ENCODE measurements at regions of chr6 and their contacts with region 1.

Region 1: DNA sequence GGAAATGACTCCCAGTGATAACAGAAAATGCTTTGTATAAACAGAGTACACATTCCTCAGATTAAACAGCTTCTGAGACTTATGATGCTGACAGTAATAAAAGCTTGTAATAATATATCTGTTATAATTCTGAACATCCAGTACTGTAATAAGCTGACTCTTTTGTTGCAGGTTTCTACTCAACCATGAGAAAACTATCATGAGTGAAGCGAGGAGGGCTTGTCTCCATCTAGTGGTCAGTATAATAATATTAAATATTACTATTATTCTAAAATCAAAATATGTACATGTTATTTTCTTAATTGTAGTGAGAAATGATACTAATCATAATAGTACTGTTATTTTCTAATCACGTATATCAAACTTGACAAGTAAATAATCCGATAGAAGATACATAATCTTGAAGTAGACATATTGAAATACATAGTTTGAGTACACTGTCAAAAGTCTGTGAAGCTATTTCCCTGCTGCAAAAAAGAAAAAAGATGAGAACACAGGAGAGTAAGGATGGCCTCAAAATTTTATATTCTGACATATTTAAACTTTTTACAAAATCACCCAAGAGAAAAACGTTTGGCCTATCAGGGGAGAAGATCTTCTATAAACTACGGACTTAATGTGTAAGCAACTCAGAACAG is 183.1 kb downstream of the MOXD1 start:
- DNase-seq: peak; percentile 63
- H3K4me3 ChIP-seq: no peak overlapping the region
- H3K27ac ChIP-seq: no peak overlapping the region
- H3K4me1 ChIP-seq: peaks cover 5% of the 10 kb centered on the region
- H3K27me3 ChIP-seq: no peaks in the 10 kb centered on the region
- CTCF ChIP-seq: peak in 1 of 2 donors; percentile 25
- POLR2A ChIP-seq: no peak

Region 2: DNA sequence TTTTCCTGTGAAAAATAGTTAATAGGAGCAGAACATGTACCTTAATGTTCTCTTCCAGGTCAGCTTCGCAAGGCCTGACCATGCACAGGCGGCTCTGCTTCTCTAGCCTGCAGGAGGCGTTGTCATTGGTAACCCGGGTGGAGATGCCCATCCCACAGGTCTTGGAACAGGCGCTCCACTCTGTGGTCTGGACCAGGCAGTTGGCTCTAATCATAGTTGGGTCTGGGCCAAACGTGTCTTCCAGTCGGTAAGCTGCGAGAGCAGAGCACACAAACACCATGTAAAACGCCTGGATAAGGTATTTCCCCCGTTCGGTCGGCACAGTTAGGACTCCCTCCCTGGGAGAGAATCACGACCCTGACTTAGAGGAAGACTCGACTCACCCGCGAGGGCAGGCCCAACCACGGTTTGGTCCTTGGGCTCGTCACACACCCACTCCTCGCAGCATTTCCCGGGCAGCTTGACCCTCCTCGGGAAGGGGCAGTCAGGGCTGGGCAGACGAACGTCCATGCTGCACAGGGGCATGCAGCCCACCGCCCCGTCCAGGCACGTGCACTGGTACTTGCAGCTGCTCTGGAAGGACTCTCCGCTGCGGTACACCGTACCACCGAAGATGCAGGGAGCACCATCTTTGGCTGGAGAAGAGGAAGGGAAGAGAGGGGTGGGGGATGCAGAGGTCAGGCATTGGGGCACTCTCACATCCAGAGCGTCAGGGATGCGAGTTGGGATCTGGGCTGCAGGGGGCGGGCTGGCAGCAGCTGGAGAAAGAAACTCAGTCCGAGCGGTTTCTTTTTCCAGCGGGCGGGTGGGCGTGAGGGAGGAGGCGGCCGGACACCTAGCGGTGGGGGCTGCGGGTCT is 268.0 kb before region 1 on chr6:
- CTCF ChIA-PET with region 1: interaction called, 74 read pairs
- POLR2A ChIA-PET with region 1: interaction called, 20 read pairs
- dilution Hi-C with region 1: no loop called
- intact Hi-C with region 1: no loop called
- DNase-seq: peak; percentile 55
- H3K4me3 ChIP-seq: peak overlapping the region; percentile 10 to 93 (median 88)
- H3K27ac ChIP-seq: peak overlapping the region; percentile 69
- H3K4me1 ChIP-seq: peaks cover 35% of the 10 kb centered on the region
- H3K27me3 ChIP-seq: no peaks in the 10 kb centered on the region
- CTCF ChIP-seq: peak; percentile 5 to 37
- POLR2A ChIP-seq: peak; percentile 94

Region 3: GRCh38 chr6:132063738-132064137 is 154.4 kb before region 1 on chr6:
- CTCF ChIA-PET with region 1: interaction called, 16 read pairs
- POLR2A ChIA-PET with region 1: no interaction called
- dilution Hi-C with region 1: no loop called
- intact Hi-C with region 1: loop called (anchors 1 kb)
- DNase-seq: peak; percentile 98
- H3K4me3 ChIP-seq: no peak overlapping the region
- H3K27ac ChIP-seq: peak overlapping the region; percentile 99
- H3K4me1 ChIP-seq: peaks cover 72% of the 10 kb centered on the region
- H3K27me3 ChIP-seq: no peaks in the 10 kb centered on the region
- CTCF ChIP-seq: no peak
- POLR2A ChIP-seq: no peak

Region 4: GRCh38 chr6:132131758-132132157 is 86.4 kb before region 1 on chr6:
- CTCF ChIA-PET with region 1: interaction called, 13 read pairs
- POLR2A ChIA-PET with region 1: interaction called, 4 read pairs
- dilution Hi-C with region 1: no loop called
- intact Hi-C with region 1: loop called (anchors 1 kb)
- DNase-seq: peak; percentile 99
- H3K4me3 ChIP-seq: peak overlapping the region in 1 of 3 experiments; percentile 95
- H3K27ac ChIP-seq: peak overlapping the region; percentile 100
- H3K4me1 ChIP-seq: peaks cover 54% of the 10 kb centered on the region
- H3K27me3 ChIP-seq: no peaks in the 10 kb centered on the region
- CTCF ChIP-seq: no peak
- POLR2A ChIP-seq: no peak

Region 5: GRCh38 chr6:132167929-132168892 is 50.0 kb before region 1 on chr6:
- CTCF ChIA-PET with region 1: interaction called, 11 read pairs
- POLR2A ChIA-PET with region 1: no interaction called
- dilution Hi-C with region 1: no loop called
- intact Hi-C with region 1: no loop called
- DNase-seq: no peak
- H3K4me3 ChIP-seq: no peak overlapping the region
- H3K27ac ChIP-seq: no peak overlapping the region
- H3K4me1 ChIP-seq: peaks cover 3% of the 10 kb centered on the region
- H3K27me3 ChIP-seq: no peaks in the 10 kb centered on the region
- CTCF ChIP-seq: no peak
- POLR2A ChIP-seq: no peak

Region 6: GRCh38 chr6:132259070-132259469 is 40.9 kb after region 1 on chr6:
- CTCF ChIA-PET with region 1: interaction called, 13 read pairs
- POLR2A ChIA-PET with region 1: no interaction called
- dilution Hi-C with region 1: no loop called
- intact Hi-C with region 1: no loop called
- DNase-seq: peak; percentile 60
- H3K4me3 ChIP-seq: no peak overlapping the region
- H3K27ac ChIP-seq: no peak overlapping the region
- H3K4me1 ChIP-seq: no peaks in the 10 kb centered on the region
- H3K27me3 ChIP-seq: no peaks in the 10 kb centered on the region
- CTCF ChIP-seq: peak; percentile 35 to 36
- POLR2A ChIP-seq: no peak

Region 7: GRCh38 chr6:132391391-132392271 is 173.5 kb after region 1 on chr6:
- CTCF ChIA-PET with region 1: no interaction called
- POLR2A ChIA-PET with region 1: no interaction called
- dilution Hi-C with region 1: no loop called
- intact Hi-C with region 1: no loop called
- DNase-seq: no peak
- H3K4me3 ChIP-seq: no peak overlapping the region
- H3K27ac ChIP-seq: no peak overlapping the region
- H3K4me1 ChIP-seq: no peaks in the 10 kb centered on the region
- H3K27me3 ChIP-seq: peaks cover 3 to 21% of the 10 kb centered on the region in 2 experiments
- CTCF ChIP-seq: no peak
- POLR2A ChIP-seq: no peak

Region 8: DNA sequence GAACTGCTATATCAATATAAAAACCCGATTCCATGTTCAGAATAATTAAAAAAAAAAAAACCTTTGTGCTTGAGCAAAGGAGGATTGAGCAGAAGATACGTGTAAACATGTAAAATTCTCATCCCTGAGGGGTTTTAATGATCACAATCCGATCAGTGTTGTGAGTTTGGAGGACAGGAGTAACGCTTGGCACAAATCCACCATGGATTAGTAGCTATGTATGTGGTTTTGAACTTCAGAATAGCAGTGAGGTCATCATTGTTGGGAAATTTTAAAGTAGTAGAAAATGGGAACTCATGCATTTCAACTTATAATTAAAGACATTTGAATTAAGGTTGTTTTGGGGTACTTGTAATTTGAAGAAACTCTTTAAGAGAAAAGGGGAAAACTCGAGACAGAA is 799.4 kb after region 1 on chr6:
- CTCF ChIA-PET with region 1: no interaction called
- POLR2A ChIA-PET with region 1: no interaction called
- dilution Hi-C with region 1: no loop called
- intact Hi-C with region 1: no loop called
- DNase-seq: no peak
- H3K4me3 ChIP-seq: no peak overlapping the region
- H3K27ac ChIP-seq: no peak overlapping the region
- H3K4me1 ChIP-seq: no peaks in the 10 kb centered on the region
- H3K27me3 ChIP-seq: no peaks in the 10 kb centered on the region
- CTCF ChIP-seq: no peak
- POLR2A ChIP-seq: no peak